ENCODE measurements at regions of chr19 and their contacts with region 1.

Region 1: GRCh38 chr19:38315657-38316476 is at the start of gene YIF1B:
- DNase-seq: peak; percentile 97
- ATAC-seq: peak; percentile 95
- H3K4me3 Mint-ChIP-seq: peak within 1 kb of the TSS; percentile 94
- H3K27ac Mint-ChIP-seq: peak within 1 kb of the TSS; percentile 98
- H3K4me1 Mint-ChIP-seq: peaks cover 35% of the 10 kb centered on the region
- H3K27me3 Mint-ChIP-seq: no peaks in the 10 kb centered on the region
- total RNA-seq, gene YIF1B: 76.3 to 90.1 TPM

Region 2: DNA sequence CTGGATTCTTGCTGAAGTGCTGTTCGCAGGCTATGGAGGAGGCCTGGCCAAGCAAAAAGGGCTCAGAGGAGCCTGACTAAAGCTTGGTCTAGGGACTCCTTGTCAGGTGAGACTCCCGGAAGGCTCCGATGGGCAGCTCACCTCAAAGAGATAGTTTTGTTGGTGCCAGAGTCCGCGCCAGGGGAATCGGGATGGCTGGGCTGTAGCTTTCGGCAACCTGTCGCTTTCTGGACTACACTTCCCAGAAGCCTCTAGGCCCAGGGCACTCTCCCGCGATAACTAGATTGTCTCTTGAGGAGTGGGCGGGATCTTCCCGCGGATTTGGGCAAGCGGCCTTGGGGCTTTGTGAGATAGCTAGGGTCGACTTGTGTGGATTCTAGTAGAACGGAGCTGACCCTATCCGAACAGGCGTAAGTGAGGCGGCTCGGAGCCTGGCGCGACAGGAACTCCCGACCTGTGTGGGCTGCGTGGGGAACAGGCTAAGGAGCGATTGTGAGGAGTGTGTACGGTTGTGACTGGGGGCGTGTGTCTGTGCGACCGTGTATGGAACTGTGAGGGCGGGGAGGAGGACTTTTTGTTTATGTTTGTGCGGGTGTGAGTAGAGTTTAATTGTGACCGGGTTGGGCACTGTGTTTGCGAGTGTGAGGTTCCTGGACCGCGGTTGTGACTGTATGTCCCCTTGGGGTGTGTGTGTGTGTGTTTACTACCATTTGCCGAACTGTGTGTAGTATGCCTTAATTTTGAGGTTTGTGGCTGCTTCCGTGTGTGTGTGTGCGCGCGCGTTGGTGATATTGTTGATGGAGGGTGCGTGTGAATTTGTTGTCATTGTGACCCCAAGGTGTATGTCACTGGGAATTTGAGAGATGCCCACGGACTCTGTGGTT is 1465.1 kb before region 1 on chr19 and contains the start of gene ZNF345:
- CTCF ChIA-PET with region 1: no interaction called
- POLR2A ChIA-PET with region 1: no interaction called
- intact Hi-C with region 1: loop called in 1 of 2 experiments (anchors 5 kb)
- DNase-seq: peak; percentile 91
- ATAC-seq: peak; percentile 82
- H3K4me3 Mint-ChIP-seq: no peak within 1 kb of the TSS
- H3K27ac Mint-ChIP-seq: no peak within 1 kb of the TSS
- H3K4me1 Mint-ChIP-seq: peaks cover 10% of the 10 kb centered on the region
- H3K27me3 Mint-ChIP-seq: no peaks in the 10 kb centered on the region
- total RNA-seq, gene ZNF345: 3.5 to 4.6 TPM

Region 3: GRCh38 chr19:37655689-37656371 is 660.0 kb before region 1 on chr19:
- CTCF ChIA-PET with region 1: no interaction called
- POLR2A ChIA-PET with region 1: no interaction called
- intact Hi-C with region 1: loop called in 1 of 2 experiments (anchors 5 kb)
- DNase-seq: peak; percentile 93
- ATAC-seq: peak; percentile 79
- H3K4me3 Mint-ChIP-seq: peak overlapping the region; percentile 94
- H3K27ac Mint-ChIP-seq: peak overlapping the region; percentile 99
- H3K4me1 Mint-ChIP-seq: peaks cover 33% of the 10 kb centered on the region
- H3K27me3 Mint-ChIP-seq: no peaks in the 10 kb centered on the region

Region 4: GRCh38 chr19:38245826-38246498 is 69.9 kb before region 1 on chr19:
- CTCF ChIA-PET with region 1: interaction called, 21 read pairs
- POLR2A ChIA-PET with region 1: no interaction called
- intact Hi-C with region 1: loop called in 1 of 2 experiments (anchors 1 kb)
- DNase-seq: no peak
- ATAC-seq: no peak
- H3K4me3 Mint-ChIP-seq: no peak overlapping the region
- H3K27ac Mint-ChIP-seq: no peak overlapping the region
- H3K4me1 Mint-ChIP-seq: peaks cover 3% of the 10 kb centered on the region
- H3K27me3 Mint-ChIP-seq: peaks cover 2% of the 10 kb centered on the region

Region 5: DNA sequence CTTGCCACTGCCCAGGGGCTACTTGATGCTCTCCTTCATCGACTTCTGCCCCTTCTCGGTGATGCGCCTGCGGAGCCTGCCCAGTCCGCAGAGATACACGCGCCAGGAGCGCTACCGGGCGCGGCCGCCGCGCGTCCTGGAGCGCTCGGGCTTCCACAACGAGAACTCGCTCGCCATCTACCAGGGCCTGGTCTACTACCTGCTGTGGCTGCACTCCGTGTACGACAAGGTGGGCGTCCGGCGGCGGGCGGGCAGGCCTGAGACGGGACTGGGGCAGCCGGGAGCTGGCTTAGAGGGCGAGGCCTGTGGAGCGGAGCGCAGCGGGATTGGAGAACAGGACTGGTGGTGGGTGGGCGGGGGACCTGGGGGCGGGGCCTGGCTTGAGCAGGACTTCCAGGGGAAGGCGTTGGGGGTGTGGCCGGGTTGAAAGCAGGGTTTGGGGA is 45.8 kb after region 1 on chr19:
- CTCF ChIA-PET with region 1: interaction called, 3 read pairs
- POLR2A ChIA-PET with region 1: no interaction called
- intact Hi-C with region 1: loop called in 1 of 2 experiments (anchors 1 kb)
- DNase-seq: peak; percentile 87
- ATAC-seq: peak; percentile 78
- H3K4me3 Mint-ChIP-seq: peak overlapping the region; percentile 76
- H3K27ac Mint-ChIP-seq: no peak overlapping the region
- H3K4me1 Mint-ChIP-seq: peaks cover 9% of the 10 kb centered on the region
- H3K27me3 Mint-ChIP-seq: peaks cover 22% of the 10 kb centered on the region

Region 6: DNA sequence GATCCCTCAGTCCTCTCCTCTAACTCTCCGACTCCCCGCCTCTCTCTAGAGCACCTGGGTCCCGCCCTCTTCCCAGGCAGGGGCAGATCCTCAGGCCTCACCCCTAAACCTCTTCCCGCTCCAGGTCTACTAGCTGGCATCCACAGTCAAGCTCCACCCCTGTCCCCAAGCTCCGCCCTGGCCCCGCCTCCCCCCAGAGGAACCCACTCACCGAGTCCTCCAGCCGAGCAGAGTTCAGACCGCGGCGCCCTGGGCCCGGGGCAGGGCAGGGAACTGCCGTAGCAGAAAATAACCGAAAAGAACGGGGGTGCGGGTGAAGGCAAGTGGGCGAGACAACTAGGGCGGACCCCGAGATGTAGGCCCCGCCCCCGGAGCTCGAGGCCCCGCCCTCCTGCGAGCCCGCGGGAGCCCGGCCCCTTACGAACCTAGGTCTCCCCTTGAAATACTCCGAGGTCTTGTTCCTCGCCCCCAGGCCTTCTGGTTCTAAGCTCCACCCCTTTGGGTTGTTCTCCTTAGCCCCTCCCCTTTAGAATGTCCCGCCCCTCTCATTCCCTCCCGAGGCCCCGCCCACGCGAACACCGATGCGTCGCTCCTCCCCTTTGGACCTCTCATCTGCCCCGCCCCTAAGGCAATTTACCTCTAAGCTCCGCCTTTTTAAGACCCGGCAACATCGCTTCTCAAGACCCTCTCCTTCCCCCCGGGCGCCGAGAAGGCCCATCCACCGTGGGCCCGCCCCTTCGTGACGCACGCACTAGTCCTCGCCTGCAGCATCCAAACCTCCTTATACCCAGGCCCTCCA is 71.9 kb after region 1 on chr19 and contains the start of gene GGN:
- CTCF ChIA-PET with region 1: no interaction called
- POLR2A ChIA-PET with region 1: no interaction called
- intact Hi-C with region 1: loop called in 1 of 2 experiments (anchors 1 kb)
- DNase-seq: peak; percentile 94
- ATAC-seq: peak; percentile 81
- H3K4me3 Mint-ChIP-seq: peak within 1 kb of the TSS; percentile 75
- H3K27ac Mint-ChIP-seq: peak within 1 kb of the TSS; percentile 76
- H3K4me1 Mint-ChIP-seq: peaks cover 26% of the 10 kb centered on the region
- H3K27me3 Mint-ChIP-seq: peaks cover 14% of the 10 kb centered on the region
- total RNA-seq, gene GGN: 0.30 to 0.51 TPM

Region 7: DNA sequence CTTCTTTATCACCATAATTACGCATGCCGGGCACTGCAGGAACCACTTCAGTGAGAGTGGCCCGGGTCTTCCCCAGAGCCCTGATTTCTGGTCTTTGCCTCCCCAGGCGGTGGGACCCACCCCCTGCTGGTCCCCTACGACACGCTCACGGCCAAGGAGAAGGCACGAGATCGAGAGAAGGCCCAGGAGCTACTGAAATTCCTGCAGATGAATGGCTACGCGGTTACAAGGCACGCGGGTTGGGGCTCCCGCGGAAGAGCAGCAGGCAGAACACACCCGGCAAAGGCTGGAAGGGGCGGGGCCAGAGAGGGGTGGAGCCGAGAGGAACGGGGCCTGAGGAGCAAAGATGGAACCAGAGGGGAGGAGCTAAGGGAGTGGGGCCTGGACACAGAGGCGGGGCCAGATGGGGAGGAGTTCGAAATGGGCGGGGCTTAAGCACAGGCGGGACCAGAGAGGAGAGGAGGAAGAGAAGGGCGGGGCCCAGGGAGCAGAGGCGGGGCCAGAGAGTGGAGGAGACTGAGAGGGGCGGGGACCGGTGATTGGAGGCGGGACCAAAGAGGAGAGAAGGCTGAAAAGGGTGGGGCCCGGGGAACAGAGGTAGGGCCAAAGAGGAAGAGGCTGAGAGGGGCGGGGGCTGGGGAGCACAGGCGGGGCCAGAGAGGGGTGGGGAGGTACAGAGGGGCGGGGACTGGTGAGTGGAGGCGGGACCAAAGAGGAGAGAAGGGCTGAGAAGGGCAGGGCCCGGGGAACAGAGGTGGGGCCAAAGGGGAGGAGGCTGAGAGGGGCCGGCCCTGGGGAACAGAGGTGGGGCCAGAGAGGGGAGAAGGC is 191.1 kb after region 1 on chr19:
- CTCF ChIA-PET with region 1: no interaction called
- POLR2A ChIA-PET with region 1: no interaction called
- intact Hi-C with region 1: loop called in 1 of 2 experiments (anchors 2 kb)
- DNase-seq: peak; percentile 98
- ATAC-seq: peak; percentile 94
- H3K4me3 Mint-ChIP-seq: no peak overlapping the region
- H3K27ac Mint-ChIP-seq: no peak overlapping the region
- H3K4me1 Mint-ChIP-seq: peaks cover 6% of the 10 kb centered on the region
- H3K27me3 Mint-ChIP-seq: peaks cover 2% of the 10 kb centered on the region

Measured in activated CD4-positive, alpha-beta T cell treated with anti-CD3 and anti-CD28 coated beads for 36 hours (primary cell).